Activated CD4-positive, alpha-beta memory T cell treated with anti-CD3 and anti-CD28 coated beads for 36 hours (primary cell): ENCODE measurements at regions of chr12 and their contacts with region 1.

Region 1: DNA sequence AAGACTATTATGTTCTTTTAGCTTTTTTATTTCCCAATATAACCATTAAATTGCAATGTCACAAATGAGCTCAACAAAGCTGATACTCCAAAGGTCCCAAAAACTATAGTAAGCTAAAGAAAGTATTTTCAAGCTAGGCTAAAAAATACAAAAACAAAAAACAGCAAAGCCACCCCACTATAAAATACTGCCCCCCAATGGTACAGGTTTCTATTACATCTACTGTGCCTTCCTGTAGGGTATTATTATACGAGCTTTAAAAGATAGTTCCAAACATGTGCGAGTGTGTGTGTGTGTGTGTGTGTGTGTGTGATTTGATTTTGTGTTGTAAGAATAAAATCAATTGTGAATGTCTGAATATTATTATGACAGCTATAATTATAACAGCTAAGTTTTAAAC is 1.1 kb downstream of the IFNG start:
- DNase-seq: no peak
- H3K4me3 Mint-ChIP-seq: peak overlapping the region; percentile 74
- H3K27ac Mint-ChIP-seq: peak overlapping the region; percentile 83
- H3K4me1 Mint-ChIP-seq: peaks cover 45% of the 10 kb centered on the region
- H3K27me3 Mint-ChIP-seq: no peaks in the 10 kb centered on the region

Region 2: GRCh38 chr12:67355578-67356379 is 802.7 kb before region 1 on chr12:
- CTCF ChIA-PET with region 1: interaction called, 8 read pairs
- POLR2A ChIA-PET with region 1: no interaction called
- intact Hi-C with region 1: loop called (anchors 10 kb)
- DNase-seq: peak; percentile 11
- H3K4me3 Mint-ChIP-seq: no peak overlapping the region
- H3K27ac Mint-ChIP-seq: no peak overlapping the region
- H3K4me1 Mint-ChIP-seq: peaks cover 35% of the 10 kb centered on the region
- H3K27me3 Mint-ChIP-seq: no peaks in the 10 kb centered on the region

Region 3: DNA sequence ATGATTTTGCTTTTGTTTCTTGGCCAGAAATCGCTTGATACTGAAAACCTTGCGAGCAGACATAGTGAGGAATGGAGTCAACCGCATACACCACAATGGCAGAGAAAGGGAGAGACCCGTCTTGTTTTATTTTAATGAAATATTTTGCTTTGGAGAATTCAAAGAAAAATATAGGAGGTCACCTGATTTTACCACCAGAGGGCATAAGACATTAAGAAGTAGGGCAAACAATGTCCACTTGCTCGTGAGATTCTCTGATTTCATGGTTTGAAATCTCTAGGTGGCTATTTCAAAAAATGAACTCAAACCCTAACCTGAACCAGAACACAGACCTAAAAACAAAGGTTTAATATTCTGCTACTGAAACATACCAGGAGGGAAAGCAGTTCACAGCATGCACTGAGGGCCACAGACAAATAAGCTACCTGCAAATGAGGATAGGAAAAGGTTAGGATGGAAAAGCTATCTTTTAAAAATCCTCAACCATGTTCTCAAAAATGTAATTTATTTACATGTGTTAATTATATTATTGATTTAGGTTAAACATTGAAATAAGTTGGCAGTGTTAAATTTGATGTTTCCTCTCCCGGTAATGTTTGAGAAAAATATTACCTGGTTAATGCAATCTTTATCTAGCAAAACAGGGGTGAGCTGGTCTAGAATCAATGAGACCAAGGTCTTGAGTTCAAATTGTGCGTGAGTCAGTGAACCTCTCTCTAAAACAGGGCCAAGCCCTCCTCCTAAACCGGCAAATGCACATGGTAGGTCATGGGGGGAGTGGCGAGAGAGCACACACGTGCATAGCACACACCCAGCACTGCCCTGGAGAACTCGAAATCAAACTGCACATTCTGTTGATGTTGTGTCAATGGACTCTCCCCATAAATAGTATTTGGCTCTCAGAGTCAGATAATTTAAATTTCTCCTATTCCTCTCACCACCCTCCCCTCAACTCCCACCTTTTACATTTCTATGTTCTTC is 156.7 kb before region 1 on chr12:
- CTCF ChIA-PET with region 1: interaction called, 34 read pairs
- POLR2A ChIA-PET with region 1: interaction called, 4 read pairs
- intact Hi-C with region 1: loop called (anchors 1 kb)
- DNase-seq: no peak
- H3K4me3 Mint-ChIP-seq: no peak overlapping the region
- H3K27ac Mint-ChIP-seq: peak overlapping the region; percentile 15
- H3K4me1 Mint-ChIP-seq: peaks cover 15% of the 10 kb centered on the region
- H3K27me3 Mint-ChIP-seq: no peaks in the 10 kb centered on the region

Region 4: DNA sequence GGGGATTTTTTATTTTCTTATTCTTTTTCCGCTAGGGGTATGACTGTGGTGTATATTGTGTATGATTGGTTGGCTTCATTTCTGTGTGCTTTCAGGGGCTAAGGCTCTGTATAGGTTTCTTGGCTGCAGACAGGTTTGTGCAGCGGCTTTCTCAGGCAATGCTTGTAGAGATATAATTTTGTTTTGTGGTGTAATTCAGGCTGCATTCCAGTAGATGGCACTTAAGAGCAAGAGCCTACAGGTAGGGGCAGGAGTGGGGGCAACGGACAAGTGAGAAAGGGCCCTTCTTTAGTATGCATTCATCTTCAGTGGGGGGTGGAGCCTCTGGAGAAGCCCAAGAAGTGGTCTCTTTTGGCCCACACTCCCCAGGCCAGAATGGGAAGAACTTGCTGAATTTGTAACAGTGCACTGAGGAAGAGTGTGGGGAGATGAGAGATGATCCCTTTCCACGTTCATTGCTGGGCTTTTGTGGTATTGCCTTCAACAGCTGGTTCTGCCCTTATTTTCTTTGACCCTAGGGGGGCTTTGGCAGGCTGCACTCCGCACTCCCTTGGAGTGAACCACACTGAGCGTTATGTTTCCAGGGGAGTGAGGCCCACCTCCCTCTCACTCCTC is 90.6 kb before region 1 on chr12:
- CTCF ChIA-PET with region 1: interaction called, 11 read pairs
- POLR2A ChIA-PET with region 1: no interaction called
- intact Hi-C with region 1: no loop called
- DNase-seq: no peak
- H3K4me3 Mint-ChIP-seq: no peak overlapping the region
- H3K27ac Mint-ChIP-seq: peak overlapping the region; percentile 60
- H3K4me1 Mint-ChIP-seq: peaks cover 11% of the 10 kb centered on the region
- H3K27me3 Mint-ChIP-seq: no peaks in the 10 kb centered on the region

Region 5: GRCh38 chr12:68102163-68102562 is 56.3 kb before region 1 on chr12:
- CTCF ChIA-PET with region 1: no interaction called
- POLR2A ChIA-PET with region 1: no interaction called
- intact Hi-C with region 1: no loop called
- DNase-seq: no peak
- H3K4me3 Mint-ChIP-seq: no peak overlapping the region
- H3K27ac Mint-ChIP-seq: no peak overlapping the region
- H3K4me1 Mint-ChIP-seq: no peaks in the 10 kb centered on the region
- H3K27me3 Mint-ChIP-seq: no peaks in the 10 kb centered on the region

Region 6: GRCh38 chr12:68137335-68137830 is 21.0 kb before region 1 on chr12:
- CTCF ChIA-PET with region 1: interaction called, 11 read pairs
- POLR2A ChIA-PET with region 1: interaction called, 3 read pairs
- intact Hi-C with region 1: loop called (anchors 1 kb)
- DNase-seq: peak; percentile 25
- H3K4me3 Mint-ChIP-seq: no peak overlapping the region
- H3K27ac Mint-ChIP-seq: peak overlapping the region; percentile 75
- H3K4me1 Mint-ChIP-seq: peaks cover 59% of the 10 kb centered on the region
- H3K27me3 Mint-ChIP-seq: no peaks in the 10 kb centered on the region

Region 7: DNA sequence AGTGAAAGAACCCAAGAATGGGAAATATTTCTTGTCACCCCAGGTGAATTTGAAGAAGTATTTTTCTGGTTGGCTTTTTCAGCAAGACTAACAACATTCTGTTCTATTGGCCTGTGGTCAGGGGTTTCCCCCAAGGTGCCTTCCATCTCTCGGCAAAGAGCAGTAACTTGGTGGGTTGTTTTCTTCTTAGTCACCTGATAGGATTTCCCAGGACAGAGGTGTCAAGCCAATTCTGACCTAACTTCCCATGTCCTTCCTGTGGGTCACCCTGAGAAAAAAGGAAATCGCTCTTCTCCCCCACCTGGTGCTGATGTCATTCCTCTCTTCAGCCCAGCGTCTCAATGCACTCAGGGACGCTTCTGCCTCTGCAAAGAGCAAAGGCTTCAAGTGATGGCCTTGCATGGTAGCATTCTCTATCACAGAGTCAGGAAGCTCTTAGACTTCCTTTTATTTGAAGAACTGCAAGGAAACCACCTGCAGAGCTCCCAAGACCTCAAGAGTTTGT is 17.2 kb after region 1 on chr12:
- CTCF ChIA-PET with region 1: interaction called, 25 read pairs
- POLR2A ChIA-PET with region 1: interaction called, 5 read pairs
- intact Hi-C with region 1: loop called (anchors 1 kb)
- DNase-seq: peak; percentile 75
- H3K4me3 Mint-ChIP-seq: peak overlapping the region; percentile 60
- H3K27ac Mint-ChIP-seq: peak overlapping the region; percentile 69
- H3K4me1 Mint-ChIP-seq: peaks cover 60% of the 10 kb centered on the region
- H3K27me3 Mint-ChIP-seq: no peaks in the 10 kb centered on the region

Region 8: GRCh38 chr12:68189821-68190242 is 31.4 kb after region 1 on chr12:
- CTCF ChIA-PET with region 1: interaction called, 6 read pairs
- POLR2A ChIA-PET with region 1: interaction called, 7 read pairs
- intact Hi-C with region 1: loop called (anchors 1 kb)
- DNase-seq: peak; percentile 59
- H3K4me3 Mint-ChIP-seq: no peak overlapping the region
- H3K27ac Mint-ChIP-seq: no peak overlapping the region
- H3K4me1 Mint-ChIP-seq: peaks cover 15% of the 10 kb centered on the region
- H3K27me3 Mint-ChIP-seq: peaks cover 2% of the 10 kb centered on the region